ENCODE measurements at regions of chr3 and their contacts with region 1.

Region 1: GRCh38 chr3:73502609-73503583 is 121.8 kb downstream of the PDZRN3 start:
- DNase-seq: peak in 31 of 35 experiments; percentile 5 to 66 (median 27)
- ATAC-seq: peak in 1 of 4 experiments; percentile 48
- H3K4me3 ChIP-seq: no peak overlapping the region
- H3K4me3 Mint-ChIP-seq: no peak overlapping the region
- H3K27ac ChIP-seq: no peak overlapping the region
- H3K27ac Mint-ChIP-seq: no peak overlapping the region
- H3K4me1 ChIP-seq: no peaks in the 10 kb centered on the region
- H3K4me1 Mint-ChIP-seq: no peaks in the 10 kb centered on the region
- H3K27me3 ChIP-seq: peaks cover 0 to 11% of the 10 kb centered on the region in 2 experiments
- H3K27me3 Mint-ChIP-seq: peaks cover 17 to 21% of the 10 kb centered on the region in 2 donors

Region 2: DNA sequence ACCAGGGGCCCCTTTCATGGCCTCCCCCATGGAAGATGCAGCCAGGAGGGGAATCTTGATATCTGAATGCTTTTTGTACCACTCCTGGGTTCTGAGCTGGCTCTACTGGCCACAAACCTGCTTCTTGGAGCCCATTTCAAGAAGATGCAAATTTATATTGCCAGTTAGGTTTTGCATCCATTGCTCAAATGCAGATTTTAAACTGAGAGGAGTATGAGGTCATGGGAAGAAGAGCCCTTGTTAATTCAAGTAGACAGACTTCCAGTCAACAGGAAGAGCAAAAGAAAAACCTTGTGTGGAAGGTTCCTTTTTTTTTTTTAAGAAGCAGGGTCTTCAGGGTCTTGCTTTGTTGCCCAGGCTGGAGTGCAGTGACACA is 11.6 kb before region 1 on chr3:
- CTCF ChIA-PET with region 1: interaction called in 1 of 2 experiments, 10 read pairs
- POLR2A ChIA-PET with region 1: no interaction called
- DNase-seq: no peak
- ATAC-seq: no peak
- H3K4me3 ChIP-seq: no peak overlapping the region
- H3K4me3 Mint-ChIP-seq: no peak overlapping the region
- H3K27ac ChIP-seq: no peak overlapping the region
- H3K27ac Mint-ChIP-seq: no peak overlapping the region
- H3K4me1 ChIP-seq: no peaks in the 10 kb centered on the region
- H3K4me1 Mint-ChIP-seq: no peaks in the 10 kb centered on the region
- H3K27me3 ChIP-seq: peaks cover 2 to 4% of the 10 kb centered on the region in 2 experiments
- H3K27me3 Mint-ChIP-seq: peaks cover 3 to 7% of the 10 kb centered on the region in 2 donors

Region 3: GRCh38 chr3:73707772-73708171 is 204.9 kb after region 1 on chr3:
- CTCF ChIA-PET with region 1: no interaction called
- POLR2A ChIA-PET with region 1: no interaction called
- DNase-seq: no peak
- ATAC-seq: no peak
- H3K4me3 ChIP-seq: no peak overlapping the region
- H3K4me3 Mint-ChIP-seq: no peak overlapping the region
- H3K27ac ChIP-seq: no peak overlapping the region
- H3K27ac Mint-ChIP-seq: no peak overlapping the region
- H3K4me1 ChIP-seq: no peaks in the 10 kb centered on the region
- H3K4me1 Mint-ChIP-seq: no peaks in the 10 kb centered on the region
- H3K27me3 ChIP-seq: no peaks in the 10 kb centered on the region
- H3K27me3 Mint-ChIP-seq: no peaks in the 10 kb centered on the region